Activated B cell treated with CpG ODN at 0.5 μM for 24 hours (primary cell): ENCODE measurements at regions of chr1 and their contacts with region 1.

Region 1: GRCh38 chr1:12124693-12125421 is 41.9 kb upstream of the TNFRSF1B start:
- DNase-seq: peak; percentile 68
- ATAC-seq: peak; percentile 76
- H3K4me3 Mint-ChIP-seq: peak overlapping the region; percentile 50
- H3K27ac Mint-ChIP-seq: peak overlapping the region; percentile 64
- H3K4me1 Mint-ChIP-seq: peaks cover 32% of the 10 kb centered on the region
- H3K27me3 Mint-ChIP-seq: no peaks in the 10 kb centered on the region
- CTCF ChIP-seq: peak; percentile 91

Region 2: GRCh38 chr1:12107736-12108135 is 17.1 kb before region 1 on chr1:
- CTCF ChIA-PET with region 1: interaction called, 11 read pairs
- POLR2A ChIA-PET with region 1: no interaction called
- intact Hi-C with region 1: no loop called
- DNase-seq: no peak
- ATAC-seq: no peak
- H3K4me3 Mint-ChIP-seq: no peak overlapping the region
- H3K27ac Mint-ChIP-seq: no peak overlapping the region
- H3K4me1 Mint-ChIP-seq: no peaks in the 10 kb centered on the region
- H3K27me3 Mint-ChIP-seq: no peaks in the 10 kb centered on the region
- CTCF ChIP-seq: no peak

Region 3: DNA sequence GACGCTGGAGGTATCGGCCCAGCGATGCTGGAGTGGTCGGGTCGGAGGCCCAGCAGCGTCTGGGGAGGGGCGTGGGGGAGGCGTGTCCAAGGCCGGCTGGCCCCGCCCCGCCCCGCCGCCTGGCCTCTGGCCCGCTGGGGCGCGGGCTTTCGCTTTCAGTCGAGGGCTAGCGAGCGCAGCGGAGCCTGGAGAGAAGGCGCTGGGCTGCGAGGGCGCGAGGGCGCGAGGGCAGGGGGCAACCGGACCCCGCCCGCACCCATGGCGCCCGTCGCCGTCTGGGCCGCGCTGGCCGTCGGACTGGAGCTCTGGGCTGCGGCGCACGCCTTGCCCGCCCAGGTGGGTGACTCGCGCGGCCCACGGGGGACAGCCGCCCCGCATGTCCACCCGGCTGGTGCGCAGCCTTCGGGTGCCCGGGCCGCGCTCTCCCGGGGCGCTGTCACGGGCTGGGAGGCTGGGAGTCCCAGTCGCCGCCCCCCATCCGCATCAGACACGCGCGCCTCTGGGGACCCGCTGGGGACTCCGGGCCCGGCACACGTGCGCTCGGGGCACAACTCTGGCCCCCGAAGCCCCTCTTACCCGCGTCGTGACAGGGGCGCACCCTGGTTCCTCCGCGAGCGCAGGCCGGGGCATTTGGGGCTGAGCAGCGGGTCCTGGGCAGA is 42.1 kb after region 1 on chr1 and contains the start of gene TNFRSF1B:
- CTCF ChIA-PET with region 1: interaction called, 27 read pairs
- POLR2A ChIA-PET with region 1: interaction called, 34 read pairs
- intact Hi-C with region 1: loop called (anchors 1 kb)
- DNase-seq: peak; percentile 70
- ATAC-seq: peak; percentile 72
- H3K4me3 Mint-ChIP-seq: peak within 1 kb of the TSS; percentile 97
- H3K27ac Mint-ChIP-seq: peak within 1 kb of the TSS; percentile 92
- H3K4me1 Mint-ChIP-seq: peaks cover 71% of the 10 kb centered on the region
- H3K27me3 Mint-ChIP-seq: no peaks in the 10 kb centered on the region
- CTCF ChIP-seq: no peak
- total RNA-seq, gene TNFRSF1B: 89.0 and 98.6 TPM in 2 replicates

Region 4: DNA sequence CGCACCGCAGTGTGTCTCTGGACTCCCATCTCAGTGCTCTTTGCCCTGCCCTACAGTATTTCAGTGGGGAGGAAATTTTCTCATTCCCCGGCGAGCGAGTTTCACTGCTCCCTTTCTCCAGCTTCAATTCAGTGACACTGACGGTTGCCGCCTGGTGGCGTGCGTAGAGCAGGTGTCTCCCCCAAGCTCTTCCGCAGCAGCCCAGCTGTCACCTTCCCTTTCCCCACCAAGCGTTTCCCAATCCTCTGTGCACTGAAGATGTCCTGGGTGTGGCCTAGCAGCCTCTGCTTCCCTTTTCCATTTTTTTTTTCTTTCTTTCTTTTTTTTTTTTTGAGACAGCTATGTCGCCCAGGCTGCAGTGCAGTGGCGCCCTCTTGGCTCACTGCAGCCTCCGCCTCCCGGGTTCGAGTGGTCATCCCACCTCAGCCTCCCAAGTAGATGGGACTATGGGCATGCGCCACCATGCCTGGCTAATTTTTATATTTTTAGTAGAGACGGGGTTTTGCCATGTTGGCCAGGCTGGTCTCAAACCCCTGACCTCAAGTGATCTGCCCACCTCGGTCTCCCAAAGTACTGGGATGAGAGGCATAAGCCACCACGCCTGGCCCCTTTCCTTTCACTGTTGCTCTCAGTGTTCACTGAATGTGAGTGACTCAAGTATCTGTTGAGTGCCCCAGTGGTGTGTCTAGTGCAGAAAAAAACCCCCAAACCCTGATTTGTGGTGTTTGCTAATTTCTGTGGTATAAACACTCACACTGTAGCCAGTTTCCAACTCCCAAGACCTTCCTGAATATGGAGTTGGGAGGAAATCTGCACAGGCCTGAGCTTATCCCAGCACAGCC is 72.0 kb after region 1 on chr1:
- CTCF ChIA-PET with region 1: interaction called, 116 read pairs
- POLR2A ChIA-PET with region 1: interaction called, 16 read pairs
- intact Hi-C with region 1: no loop called
- DNase-seq: no peak
- ATAC-seq: peak; percentile 29
- H3K4me3 Mint-ChIP-seq: no peak overlapping the region
- H3K27ac Mint-ChIP-seq: peak overlapping the region; percentile 30
- H3K4me1 Mint-ChIP-seq: peaks cover 65% of the 10 kb centered on the region
- H3K27me3 Mint-ChIP-seq: no peaks in the 10 kb centered on the region
- CTCF ChIP-seq: no peak

Region 5: GRCh38 chr1:12229835-12230548 is 105.1 kb after region 1 on chr1 and contains the start of gene VPS13D:
- CTCF ChIA-PET with region 1: interaction called, 14 read pairs
- POLR2A ChIA-PET with region 1: interaction called, 4 read pairs
- intact Hi-C with region 1: no loop called
- DNase-seq: peak; percentile 87
- ATAC-seq: peak; percentile 96
- H3K4me3 Mint-ChIP-seq: peak within 1 kb of the TSS; percentile 86
- H3K27ac Mint-ChIP-seq: peak within 1 kb of the TSS; percentile 41
- H3K4me1 Mint-ChIP-seq: peaks cover 19% of the 10 kb centered on the region
- H3K27me3 Mint-ChIP-seq: peaks cover 3% of the 10 kb centered on the region
- CTCF ChIP-seq: peak; percentile 26
- total RNA-seq, gene VPS13D: 52.6 and 64.5 TPM in 2 replicates

Region 6: DNA sequence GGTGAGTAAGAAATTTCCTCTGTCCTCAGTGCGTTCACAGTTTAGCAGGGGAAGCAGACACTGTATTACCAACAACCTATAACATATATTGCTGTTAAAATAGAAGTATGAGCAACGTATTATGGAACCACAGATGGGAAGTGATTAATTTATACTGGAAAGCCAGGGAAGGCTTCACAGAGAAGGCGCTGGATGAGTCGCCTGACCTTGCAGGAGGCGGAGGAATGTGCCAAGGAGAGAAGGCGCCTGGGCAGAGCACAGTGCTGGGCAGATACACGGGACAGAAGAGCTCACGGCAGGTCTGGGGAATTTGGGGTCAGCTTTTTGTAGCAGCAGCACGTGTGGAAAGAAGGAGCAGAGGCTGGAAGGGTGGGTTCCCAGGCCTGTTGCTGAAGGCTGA is 376.8 kb after region 1 on chr1:
- CTCF ChIA-PET with region 1: no interaction called
- POLR2A ChIA-PET with region 1: no interaction called
- intact Hi-C with region 1: no loop called
- DNase-seq: no peak
- ATAC-seq: no peak
- H3K4me3 Mint-ChIP-seq: no peak overlapping the region
- H3K27ac Mint-ChIP-seq: no peak overlapping the region
- H3K4me1 Mint-ChIP-seq: peaks cover 2% of the 10 kb centered on the region
- H3K27me3 Mint-ChIP-seq: no peaks in the 10 kb centered on the region
- CTCF ChIP-seq: no peak